ENCODE measurements at regions of chr15 and their contacts with region 1.

Region 1: GRCh38 chr15:43302205-43302817 is 28.1 kb downstream of the LCMT2 start:
- DNase-seq: no peak
- ATAC-seq: no peak
- H3K4me3 Mint-ChIP-seq: no peak within 1 kb of the TSS
- H3K27ac Mint-ChIP-seq: no peak within 1 kb of the TSS
- H3K4me1 Mint-ChIP-seq: no peaks in the 10 kb centered on the region
- H3K27me3 Mint-ChIP-seq: peaks cover 9% of the 10 kb centered on the region

Region 2: GRCh38 chr15:43048935-43049334 is 253.4 kb before region 1 on chr15:
- CTCF ChIA-PET with region 1: no interaction called
- POLR2A ChIA-PET with region 1: no interaction called
- intact Hi-C with region 1: no loop called
- DNase-seq: no peak
- ATAC-seq: no peak
- H3K4me3 Mint-ChIP-seq: no peak overlapping the region
- H3K27ac Mint-ChIP-seq: no peak overlapping the region
- H3K4me1 Mint-ChIP-seq: no peaks in the 10 kb centered on the region
- H3K27me3 Mint-ChIP-seq: no peaks in the 10 kb centered on the region

Region 3: GRCh38 chr15:43361313-43361903 is 59.1 kb after region 1 on chr15:
- CTCF ChIA-PET with region 1: no interaction called
- POLR2A ChIA-PET with region 1: no interaction called
- intact Hi-C with region 1: loop called in 1 of 2 experiments (anchors 10 kb)
- DNase-seq: no peak
- ATAC-seq: no peak
- H3K4me3 Mint-ChIP-seq: no peak overlapping the region
- H3K27ac Mint-ChIP-seq: no peak overlapping the region
- H3K4me1 Mint-ChIP-seq: no peaks in the 10 kb centered on the region
- H3K27me3 Mint-ChIP-seq: no peaks in the 10 kb centered on the region

Measured in activated CD4-positive, alpha-beta T cell treated with anti-CD3 and anti-CD28 coated beads for 36 hours (primary cell).